ENCODE measurements at regions of chr3 and their contacts with region 1.

Region 1: DNA sequence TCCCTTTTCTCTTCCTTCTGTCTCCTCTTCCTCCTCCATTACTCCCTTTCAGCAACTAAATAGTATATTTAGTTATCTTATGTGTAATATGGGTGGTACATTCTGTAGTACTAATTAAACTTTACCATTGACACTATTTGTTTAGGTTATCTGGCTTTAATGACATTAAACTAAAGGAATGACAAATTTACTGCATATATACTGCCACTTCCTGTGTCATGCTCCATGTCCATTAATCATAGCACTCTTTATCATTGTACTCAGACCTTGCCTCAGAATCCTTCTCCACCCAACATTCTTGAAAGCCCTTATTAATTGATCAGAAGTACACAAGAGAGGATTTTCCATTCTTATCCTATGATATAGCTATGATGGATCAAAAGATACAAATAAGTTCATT is 244.2 kb downstream of the NAALADL2 start:
- DNase-seq: no peak
- H3K4me3 ChIP-seq: no peak overlapping the region
- CTCF ChIP-seq: no peak

Region 2: DNA sequence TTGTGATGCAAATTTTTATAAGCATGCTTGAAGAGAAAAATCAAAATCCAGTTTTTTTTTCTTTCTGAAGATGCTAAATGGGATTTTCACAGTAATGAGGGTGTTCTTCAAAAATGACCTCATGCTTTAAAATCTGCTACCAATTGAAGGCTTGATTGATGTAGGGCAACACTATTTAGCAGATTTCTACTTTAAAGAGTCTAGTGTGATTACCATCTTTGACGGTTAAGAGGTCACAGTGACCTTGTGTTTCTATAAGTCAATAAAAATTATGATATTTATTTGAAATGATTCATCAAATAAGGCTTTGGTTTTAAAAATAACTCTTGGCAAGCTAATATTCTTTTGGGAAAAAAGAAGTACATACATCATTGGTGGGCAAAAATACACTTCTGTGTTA is 33.3 kb after region 1 on chr3:
- in situ Hi-C with region 1: loop called (anchors 5 kb)
- DNase-seq: no peak
- H3K4me3 ChIP-seq: no peak overlapping the region
- CTCF ChIP-seq: no peak

Measured in astrocyte of the cerebellum (primary cell).